ENCODE measurements at regions of chr12 and their contacts with region 1.

Region 1: GRCh38 chr12:92899388-92900001 is 29.6 kb downstream of the EEA1 start:
- DNase-seq: peak; percentile 39 to 79
- ATAC-seq: peak; percentile 91 to 99 (median 96)
- H3K4me3 ChIP-seq: peak overlapping the region in 2 of 10 donors; percentile 1 to 9
- H3K27ac ChIP-seq: peak overlapping the region; percentile 17 to 86 (median 80)
- H3K4me1 ChIP-seq: peaks cover 0 to 45% (median 27%) of the 10 kb centered on the region in 9 donors
- H3K27me3 ChIP-seq: no peaks in the 10 kb centered on the region
- CTCF ChIP-seq: no peak

Region 2: DNA sequence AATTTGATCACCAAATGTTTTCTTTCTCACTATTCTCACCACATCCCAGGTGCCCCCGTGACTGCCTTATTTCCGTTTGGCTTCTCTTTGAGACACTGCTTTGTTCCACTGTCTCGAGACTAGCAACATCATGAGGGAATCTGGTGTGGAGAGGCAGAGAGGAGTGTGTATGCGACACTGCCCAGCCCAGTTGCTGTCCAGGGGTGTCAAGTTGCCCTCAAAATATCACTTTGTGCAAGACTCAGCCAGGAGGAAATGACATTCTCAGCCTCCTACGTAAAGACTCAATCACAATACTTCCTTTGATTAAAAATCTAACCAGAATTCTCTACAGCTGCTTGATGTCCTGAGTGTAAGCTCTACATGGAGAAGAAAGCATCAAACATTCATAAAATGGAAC is 77.8 kb after region 1 on chr12:
- intact Hi-C with region 1: loop called in 1 of 10 experiments (anchors 2 kb)
- DNase-seq: no peak
- ATAC-seq: peak in 2 of 8 donors; percentile 33 to 37
- H3K4me3 ChIP-seq: no peak overlapping the region
- H3K27ac ChIP-seq: peak overlapping the region in 1 of 10 donors; percentile 19
- H3K4me1 ChIP-seq: peaks cover 0 to 19% (median 0%) of the 10 kb centered on the region in 9 donors
- H3K27me3 ChIP-seq: no peaks in the 10 kb centered on the region
- CTCF ChIP-seq: no peak

Measured in heart right ventricle (tissue), 16 donors.